Natural killer cell (primary cell): ENCODE measurements at regions of chr3 and their contacts with region 1.

Region 1: GRCh38 chr3:107574650-107575049 is 51.9 kb downstream of the BBX start:
- DNase-seq: peak in 1 of 2 donors; percentile 50
- ATAC-seq: peak in 2 of 3 donors; percentile 53 to 63
- H3K4me3 ChIP-seq: no peak overlapping the region
- H3K4me3 Mint-ChIP-seq: no peak overlapping the region
- H3K27ac ChIP-seq: no peak overlapping the region
- H3K27ac Mint-ChIP-seq: no peak overlapping the region
- H3K4me1 ChIP-seq: no peaks in the 10 kb centered on the region
- H3K4me1 Mint-ChIP-seq: peaks cover 37 to 42% of the 10 kb centered on the region in 2 donors
- H3K27me3 ChIP-seq: no peaks in the 10 kb centered on the region
- H3K27me3 Mint-ChIP-seq: no peaks in the 10 kb centered on the region
- CTCF ChIP-seq: peak; percentile 55

Region 2: DNA sequence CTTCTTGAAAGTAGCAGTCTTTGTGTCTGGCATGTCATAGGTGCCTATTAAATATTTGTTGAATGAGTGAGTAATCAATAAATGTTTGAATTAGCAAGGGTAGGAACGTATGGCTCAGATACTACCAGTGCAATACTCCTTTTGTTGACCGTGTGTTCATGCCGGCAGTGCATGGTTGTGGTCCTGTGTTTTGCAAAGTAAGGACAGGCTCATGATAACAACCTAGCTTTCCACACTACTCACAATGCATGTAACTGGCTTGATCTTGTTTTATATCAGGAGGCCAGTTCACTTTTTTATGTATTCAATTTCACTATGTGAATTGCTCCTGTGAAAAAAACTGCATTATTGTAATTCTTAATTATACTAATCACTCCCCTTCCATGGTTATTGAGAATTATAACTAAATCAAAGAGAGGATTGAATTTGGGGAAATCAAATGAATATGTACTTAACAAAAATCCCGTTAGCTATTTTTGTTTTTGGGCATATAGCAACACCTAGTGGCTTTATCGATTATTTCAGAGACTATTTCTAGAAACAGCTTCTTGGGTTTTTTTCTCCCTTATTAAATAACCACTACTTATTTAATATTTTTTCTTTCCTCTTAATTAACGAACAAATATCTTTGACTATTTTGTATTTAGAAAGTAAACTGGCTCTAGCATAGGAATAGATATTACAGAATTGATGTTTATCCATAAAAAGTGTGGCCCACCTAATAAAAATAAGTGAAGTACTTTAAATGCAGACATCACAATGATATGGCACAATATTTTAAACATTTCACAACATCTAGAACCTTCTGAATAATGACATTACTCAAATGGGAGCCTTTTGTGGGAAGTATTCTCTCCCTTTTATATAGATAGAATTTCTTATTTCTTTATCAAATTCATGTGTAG is 166.6 kb after region 1 on chr3:
- intact Hi-C with region 1: loop called (anchors 10 kb)
- DNase-seq: peak in 1 of 2 donors; percentile 47
- ATAC-seq: no peak
- H3K4me3 ChIP-seq: no peak overlapping the region
- H3K4me3 Mint-ChIP-seq: no peak overlapping the region
- H3K27ac ChIP-seq: no peak overlapping the region
- H3K27ac Mint-ChIP-seq: no peak overlapping the region
- H3K4me1 ChIP-seq: no peaks in the 10 kb centered on the region
- H3K4me1 Mint-ChIP-seq: peaks cover 7 to 19% of the 10 kb centered on the region in 2 donors
- H3K27me3 ChIP-seq: no peaks in the 10 kb centered on the region
- H3K27me3 Mint-ChIP-seq: no peaks in the 10 kb centered on the region
- CTCF ChIP-seq: no peak

Region 3: GRCh38 chr3:107927361-107928083 is 352.9 kb after region 1 on chr3:
- intact Hi-C with region 1: loop called (anchors 1 kb)
- DNase-seq: peak; percentile 55 to 80
- ATAC-seq: peak; percentile 85 to 97 (median 95)
- H3K4me3 ChIP-seq: peak overlapping the region; percentile 47
- H3K4me3 Mint-ChIP-seq: peak overlapping the region; percentile 86
- H3K27ac ChIP-seq: no peak overlapping the region
- H3K27ac Mint-ChIP-seq: peak overlapping the region in 1 of 2 donors; percentile 63
- H3K4me1 ChIP-seq: peaks cover 10% of the 10 kb centered on the region
- H3K4me1 Mint-ChIP-seq: peaks cover 8 to 14% of the 10 kb centered on the region in 2 donors
- H3K27me3 ChIP-seq: peaks cover 12% of the 10 kb centered on the region
- H3K27me3 Mint-ChIP-seq: peaks cover 12 to 19% of the 10 kb centered on the region in 2 donors
- CTCF ChIP-seq: peak; percentile 96

Region 4: GRCh38 chr3:108477511-108478147 is 903.0 kb after region 1 on chr3:
- intact Hi-C with region 1: loop called (anchors 10 kb)
- DNase-seq: peak; percentile 20 to 79
- ATAC-seq: peak; percentile 79 to 85 (median 83)
- H3K4me3 ChIP-seq: no peak overlapping the region
- H3K4me3 Mint-ChIP-seq: no peak overlapping the region
- H3K27ac ChIP-seq: no peak overlapping the region
- H3K27ac Mint-ChIP-seq: no peak overlapping the region
- H3K4me1 ChIP-seq: no peaks in the 10 kb centered on the region
- H3K4me1 Mint-ChIP-seq: no peaks in the 10 kb centered on the region
- H3K27me3 ChIP-seq: no peaks in the 10 kb centered on the region
- H3K27me3 Mint-ChIP-seq: peaks cover 0 to 15% of the 10 kb centered on the region in 2 donors
- CTCF ChIP-seq: peak; percentile 83